A549 (cell line): ENCODE measurements at regions of chr3 and their contacts with region 1.

Region 1: GRCh38 chr3:141011232-141011996 is 39.7 kb upstream of the SPSB4 start:
- DNase-seq: peak; percentile 18 to 56
- ATAC-seq: peak; percentile 83 to 98
- H3K4me3 ChIP-seq: no peak overlapping the region
- H3K27ac ChIP-seq: no peak overlapping the region
- H3K4me1 ChIP-seq: no peaks in the 10 kb centered on the region
- CTCF ChIP-seq: peak; percentile 53
- EP300 ChIP-seq: no peak
- POLR2A ChIP-seq: no peak
- RAD21 ChIP-seq: peak; percentile 41 to 63; a peak in 4 of 5 replicates

Region 2: DNA sequence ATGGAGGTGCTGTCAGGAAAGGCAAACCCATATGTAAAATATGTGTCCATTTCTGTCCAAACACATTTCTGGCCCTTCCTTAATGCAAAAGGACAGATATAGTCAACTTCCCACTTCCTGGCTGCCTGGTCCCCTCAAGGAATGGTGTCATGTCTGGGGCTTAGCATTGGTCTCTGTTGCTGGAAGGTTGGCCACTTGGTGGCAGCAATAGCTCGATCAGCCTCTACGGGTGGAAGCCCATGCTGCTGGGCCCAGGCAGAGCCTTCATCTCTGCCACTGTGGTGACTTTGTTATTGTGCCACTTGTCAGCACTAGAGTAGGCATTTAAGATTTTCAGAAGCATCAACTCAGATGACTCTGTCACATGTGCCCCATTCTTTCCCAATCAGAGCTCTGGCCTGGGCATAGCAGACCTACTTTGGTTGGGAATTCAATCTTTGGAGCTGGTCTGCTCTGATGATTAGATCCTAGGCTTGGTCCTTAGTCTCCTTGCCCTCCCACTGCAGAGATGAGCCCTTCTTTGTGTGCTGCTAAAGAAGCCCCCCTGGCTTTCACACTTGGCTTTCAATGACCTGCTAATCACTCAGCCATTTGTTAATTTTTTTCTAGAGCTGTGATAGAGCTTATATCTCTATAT is 11.3 kb before region 1 on chr3:
- CTCF ChIA-PET with region 1: interaction called, 23 read pairs
- POLR2A ChIA-PET with region 1: no interaction called
- DNase-seq: peak; percentile 17 to 47
- ATAC-seq: peak; percentile 94 to 99
- H3K4me3 ChIP-seq: no peak overlapping the region
- H3K27ac ChIP-seq: no peak overlapping the region
- H3K4me1 ChIP-seq: no peaks in the 10 kb centered on the region
- CTCF ChIP-seq: peak; percentile 57
- EP300 ChIP-seq: no peak
- POLR2A ChIP-seq: no peak
- RAD21 ChIP-seq: peak; percentile 60 to 75